GM12878 (cell line): ENCODE measurements at regions of chr6 and their contacts with region 1.

Region 1: DNA sequence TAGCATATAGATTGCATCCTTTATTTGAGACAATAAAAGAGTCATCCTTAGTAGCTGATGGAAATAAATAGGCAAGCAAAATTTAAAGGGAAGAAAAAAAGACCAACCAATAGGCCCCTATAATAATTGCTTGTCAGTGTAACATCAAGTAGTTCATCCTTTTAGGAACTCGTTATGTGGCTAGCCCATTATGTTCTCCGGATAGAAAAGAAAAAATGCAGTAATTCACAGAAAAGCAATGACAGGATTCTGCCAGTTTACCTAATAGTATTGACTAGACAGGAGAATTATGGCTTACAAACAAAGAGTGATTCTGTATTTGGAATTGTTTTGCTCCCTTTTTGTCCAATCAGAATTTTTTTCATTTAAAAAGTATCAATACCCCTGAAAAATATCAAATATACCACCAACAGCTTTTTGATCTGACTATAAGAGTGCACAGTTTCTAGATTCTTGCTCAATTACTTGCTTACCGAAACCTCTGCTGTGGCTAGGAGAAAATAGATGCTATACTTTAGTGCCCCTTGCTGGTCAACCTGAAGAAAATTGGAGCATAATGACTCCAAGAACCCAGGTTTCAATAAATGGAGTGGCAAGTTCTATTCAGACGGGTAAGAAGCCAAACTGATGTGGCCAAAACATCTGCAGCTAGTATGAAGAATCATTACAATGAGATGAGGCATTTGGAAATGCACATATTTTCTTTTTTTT is 91.5 kb upstream of the SASH1 start:
- DNase-seq: no peak
- ATAC-seq: peak; percentile 33; the same call in 1 of the 3 replicates
- H3K4me3 ChIP-seq: no peak overlapping the region
- H3K27ac ChIP-seq: no peak overlapping the region
- H3K4me1 ChIP-seq: no peaks in the 10 kb centered on the region
- H3K27me3 ChIP-seq: no peaks in the 10 kb centered on the region
- CTCF ChIP-seq: peak in 1 of 3 experiments; percentile 40; a peak in 1 of 6 replicates
- EP300 ChIP-seq: no peak
- POLR2A ChIP-seq: no peak
- RAD21 ChIP-seq: peak; percentile 62

Region 2: GRCh38 chr6:147621263-147621662 is 629.9 kb before region 1 on chr6:
- CTCF ChIA-PET with region 1: no interaction called
- POLR2A ChIA-PET with region 1: no interaction called
- RAD21 ChIA-PET with region 1: no interaction called
- SMC1A ChIA-PET with region 1: no interaction called
- in situ Hi-C with region 1: no loop called
- intact Hi-C with region 1: no loop called
- DNase-seq: no peak
- ATAC-seq: no peak
- H3K4me3 ChIP-seq: no peak overlapping the region
- H3K27ac ChIP-seq: no peak overlapping the region
- H3K4me1 ChIP-seq: no peaks in the 10 kb centered on the region
- H3K27me3 ChIP-seq: no peaks in the 10 kb centered on the region
- CTCF ChIP-seq: no peak
- EP300 ChIP-seq: no peak
- POLR2A ChIP-seq: no peak
- RAD21 ChIP-seq: no peak

Region 3: GRCh38 chr6:148144917-148145521 is 106.1 kb before region 1 on chr6:
- CTCF ChIA-PET with region 1: interaction called, 3 read pairs
- POLR2A ChIA-PET with region 1: no interaction called
- RAD21 ChIA-PET with region 1: no interaction called
- SMC1A ChIA-PET with region 1: no interaction called
- in situ Hi-C with region 1: no loop called
- intact Hi-C with region 1: loop called (anchors 1 kb)
- DNase-seq: no peak
- ATAC-seq: peak; percentile 91
- H3K4me3 ChIP-seq: no peak overlapping the region
- H3K27ac ChIP-seq: no peak overlapping the region
- H3K4me1 ChIP-seq: no peaks in the 10 kb centered on the region
- H3K27me3 ChIP-seq: no peaks in the 10 kb centered on the region
- CTCF ChIP-seq: peak; percentile 71 to 87 (median 74)
- EP300 ChIP-seq: no peak
- POLR2A ChIP-seq: no peak
- RAD21 ChIP-seq: peak; percentile 55

Region 4: DNA sequence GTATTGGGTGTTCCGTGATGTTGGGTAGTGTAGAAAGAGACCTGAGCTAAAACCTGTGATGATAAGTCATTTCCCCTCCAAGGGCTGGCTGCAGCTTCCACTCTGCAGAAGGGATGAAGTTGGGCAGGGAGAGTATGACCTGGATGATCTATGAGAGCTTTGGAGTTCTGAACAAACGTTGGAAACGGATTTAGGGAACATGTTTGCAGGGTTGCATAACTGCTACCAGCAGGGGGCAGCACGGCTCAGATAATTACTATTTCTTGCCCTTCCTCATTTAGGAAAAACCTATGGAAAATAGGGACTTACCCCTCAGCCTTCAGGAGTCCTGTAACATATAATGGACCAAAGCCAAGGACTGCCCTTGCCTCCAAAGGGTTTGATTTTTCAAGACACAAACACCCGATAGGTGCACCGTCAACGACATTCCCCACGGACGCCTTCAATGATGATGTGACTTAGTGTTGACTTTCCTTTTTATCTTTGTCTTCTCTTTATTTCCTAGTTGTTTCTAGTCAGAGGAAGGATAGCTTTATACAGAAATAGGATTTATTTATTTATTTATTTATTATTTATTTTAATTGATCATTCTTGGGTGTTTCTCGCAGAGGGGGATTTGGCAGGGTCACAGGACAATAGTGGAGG is 73.4 kb before region 1 on chr6:
- CTCF ChIA-PET with region 1: interaction called, 12 read pairs
- POLR2A ChIA-PET with region 1: no interaction called
- RAD21 ChIA-PET with region 1: no interaction called
- SMC1A ChIA-PET with region 1: interaction called, 3 read pairs
- in situ Hi-C with region 1: no loop called
- intact Hi-C with region 1: loop called (anchors 1 kb)
- DNase-seq: no peak
- ATAC-seq: no peak
- H3K4me3 ChIP-seq: no peak overlapping the region
- H3K27ac ChIP-seq: no peak overlapping the region
- H3K4me1 ChIP-seq: no peaks in the 10 kb centered on the region
- H3K27me3 ChIP-seq: no peaks in the 10 kb centered on the region
- CTCF ChIP-seq: peak; percentile 58 to 71 (median 62); a peak in 5 of 6 replicates
- EP300 ChIP-seq: no peak
- POLR2A ChIP-seq: no peak
- RAD21 ChIP-seq: peak; percentile 57

Region 5: DNA sequence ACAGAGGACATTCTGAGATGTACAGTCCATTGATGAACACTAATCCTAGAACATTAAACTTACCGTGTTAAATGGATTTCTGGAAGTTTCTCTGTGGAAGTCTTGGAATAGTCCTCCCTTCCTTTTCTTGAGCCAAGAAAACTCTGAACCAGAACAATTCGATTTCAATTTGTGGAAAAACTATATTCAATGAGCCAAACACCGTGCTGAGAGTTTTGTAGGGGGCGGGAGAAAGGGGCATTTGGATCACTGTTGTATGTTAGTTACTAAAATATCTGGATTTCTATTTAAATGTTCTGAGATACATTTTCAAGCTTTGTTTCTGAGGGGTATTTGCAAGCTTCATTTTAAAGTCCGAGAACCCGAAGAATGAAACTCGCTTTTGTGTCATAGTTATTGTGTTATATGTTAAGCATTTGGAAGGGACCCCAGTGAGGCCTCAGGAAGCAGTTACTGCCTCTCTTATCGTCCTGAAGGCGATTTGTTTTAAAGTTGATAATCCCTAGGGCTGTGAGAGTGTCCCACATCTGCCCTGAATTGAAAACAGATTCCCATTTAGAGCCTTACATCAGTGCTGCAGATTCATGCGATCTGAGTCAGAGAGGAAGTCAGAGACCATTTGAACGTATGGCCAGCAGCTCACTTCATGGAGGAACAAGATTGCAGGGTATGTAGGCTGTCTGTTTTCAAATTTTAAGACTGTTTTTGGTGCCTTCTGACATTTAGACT is 20.7 kb after region 1 on chr6:
- CTCF ChIA-PET with region 1: no interaction called
- POLR2A ChIA-PET with region 1: no interaction called
- RAD21 ChIA-PET with region 1: no interaction called
- SMC1A ChIA-PET with region 1: no interaction called
- in situ Hi-C with region 1: no loop called
- intact Hi-C with region 1: no loop called
- DNase-seq: no peak
- ATAC-seq: no peak
- H3K4me3 ChIP-seq: no peak overlapping the region
- H3K27ac ChIP-seq: no peak overlapping the region
- H3K4me1 ChIP-seq: no peaks in the 10 kb centered on the region
- H3K27me3 ChIP-seq: no peaks in the 10 kb centered on the region; a peak in 1 of 4 replicates
- CTCF ChIP-seq: no peak
- EP300 ChIP-seq: no peak
- POLR2A ChIP-seq: no peak
- RAD21 ChIP-seq: no peak

Region 6: DNA sequence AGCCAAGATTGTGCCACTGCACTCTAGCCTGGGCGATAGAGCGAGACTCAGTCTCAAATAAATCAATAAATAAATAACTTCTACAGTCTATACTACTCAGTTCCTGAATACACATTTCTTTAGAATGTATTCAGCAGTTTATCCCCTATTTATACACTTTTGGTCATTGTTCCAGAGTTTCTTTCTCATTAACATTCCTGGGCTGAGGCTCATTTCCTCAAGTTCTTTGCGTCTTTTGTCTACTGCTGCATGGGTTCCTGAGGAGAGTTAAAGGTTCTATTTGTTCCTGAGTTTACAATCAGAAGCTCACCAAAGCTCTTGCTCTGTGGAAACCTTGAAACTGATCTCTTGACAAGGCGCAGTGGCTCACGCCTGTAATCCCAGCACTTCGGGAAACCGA is 53.8 kb after region 1 on chr6:
- CTCF ChIA-PET with region 1: no interaction called
- POLR2A ChIA-PET with region 1: no interaction called
- RAD21 ChIA-PET with region 1: no interaction called
- SMC1A ChIA-PET with region 1: no interaction called
- in situ Hi-C with region 1: no loop called
- intact Hi-C with region 1: no loop called
- DNase-seq: no peak
- ATAC-seq: no peak
- H3K4me3 ChIP-seq: no peak overlapping the region
- H3K27ac ChIP-seq: no peak overlapping the region
- H3K4me1 ChIP-seq: no peaks in the 10 kb centered on the region
- H3K27me3 ChIP-seq: no peaks in the 10 kb centered on the region
- CTCF ChIP-seq: no peak
- EP300 ChIP-seq: no peak
- POLR2A ChIP-seq: no peak
- RAD21 ChIP-seq: no peak